Vagina (tissue), 2 donors: ENCODE measurements at regions of chr15 and their contacts with region 1.

Region 1: GRCh38 chr15:71295639-71296273 is 180.5 kb downstream of the THSD4 start:
- DNase-seq: no peak
- H3K4me3 ChIP-seq: no peak overlapping the region
- H3K27ac ChIP-seq: peak overlapping the region; percentile 51
- H3K4me1 ChIP-seq: peaks cover 24% of the 10 kb centered on the region
- H3K27me3 ChIP-seq: no peaks in the 10 kb centered on the region
- CTCF ChIP-seq: no peak
- POLR2A ChIP-seq: no peak

Region 2: GRCh38 chr15:71256934-71257664 is 38.7 kb before region 1 on chr15:
- intact Hi-C with region 1: loop called (anchors 2 kb)
- DNase-seq: no peak
- H3K4me3 ChIP-seq: no peak overlapping the region
- H3K27ac ChIP-seq: no peak overlapping the region
- H3K4me1 ChIP-seq: peaks cover 3% of the 10 kb centered on the region
- H3K27me3 ChIP-seq: no peaks in the 10 kb centered on the region
- CTCF ChIP-seq: no peak
- POLR2A ChIP-seq: no peak

Region 3: GRCh38 chr15:71385026-71385425 is 89.3 kb after region 1 on chr15:
- intact Hi-C with region 1: no loop called
- DNase-seq: no peak
- H3K4me3 ChIP-seq: no peak overlapping the region
- H3K27ac ChIP-seq: no peak overlapping the region
- H3K4me1 ChIP-seq: peaks cover 23% of the 10 kb centered on the region
- H3K27me3 ChIP-seq: no peaks in the 10 kb centered on the region
- CTCF ChIP-seq: no peak
- POLR2A ChIP-seq: no peak